B cell (primary cell): ENCODE measurements at regions of chr1 and their contacts with region 1.

Region 1: GRCh38 chr1:235866913-235867845 is 473 bp upstream of the LYST start:
- DNase-seq: peak; percentile 98
- ATAC-seq: peak; percentile 74
- H3K4me3 ChIP-seq: peak overlapping the region; percentile 62 to 97 (median 93)
- H3K4me3 Mint-ChIP-seq: peak overlapping the region; percentile 91
- H3K27ac ChIP-seq: peak overlapping the region; percentile 94 to 99
- H3K27ac Mint-ChIP-seq: peak overlapping the region; percentile 94
- H3K4me1 ChIP-seq: peaks cover 38 to 42% of the 10 kb centered on the region in 2 donors
- H3K4me1 Mint-ChIP-seq: peaks cover 50% of the 10 kb centered on the region
- H3K27me3 ChIP-seq: no peaks in the 10 kb centered on the region
- H3K27me3 Mint-ChIP-seq: no peaks in the 10 kb centered on the region
- CTCF ChIP-seq: no peak

Region 2: DNA sequence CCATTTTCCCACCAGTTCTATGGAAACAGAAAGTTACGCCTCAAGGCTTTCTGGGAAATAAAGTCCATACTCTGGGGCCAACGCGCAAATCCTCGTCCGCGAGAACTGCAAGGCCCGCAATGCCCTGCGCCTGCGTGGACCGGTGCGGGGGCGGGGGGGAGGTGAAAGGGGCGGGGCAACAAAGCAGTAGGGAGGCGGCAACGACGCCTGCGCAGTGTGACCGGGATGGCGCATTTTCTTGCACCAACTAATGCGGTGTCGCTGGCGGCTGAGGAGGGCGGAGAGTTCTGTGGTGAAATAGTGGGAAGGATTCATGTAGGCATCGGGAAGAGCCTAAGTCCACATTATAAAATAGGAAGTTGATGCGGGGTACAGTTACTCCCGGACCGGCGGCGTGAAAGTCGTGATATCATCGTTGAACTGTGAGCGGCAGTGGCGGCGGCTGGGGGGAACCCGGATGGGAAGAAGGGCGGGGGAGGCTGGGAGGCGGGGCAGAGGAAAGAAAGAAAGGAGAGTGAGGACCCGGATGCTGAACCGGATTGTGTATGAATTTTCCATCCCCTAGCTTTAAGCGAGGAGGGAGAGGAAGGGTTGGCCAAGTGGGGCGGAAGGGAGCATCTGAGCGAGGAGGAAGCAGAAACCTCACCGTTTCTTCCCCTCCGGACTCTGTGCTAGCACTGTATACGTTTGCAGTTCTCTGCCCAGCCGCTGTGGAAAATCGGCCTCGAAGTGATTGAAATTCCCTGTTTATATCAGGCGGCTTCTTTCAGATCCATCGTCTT is 538.6 kb before region 1 on chr1 and contains the start of gene GGPS1:
- CTCF ChIA-PET with region 1: no interaction called
- POLR2A ChIA-PET with region 1: no interaction called
- intact Hi-C with region 1: loop called (anchors 2 kb)
- DNase-seq: peak; percentile 98
- ATAC-seq: peak; percentile 75
- H3K4me3 ChIP-seq: peak within 1 kb of the TSS; percentile 89 to 99 (median 99)
- H3K4me3 Mint-ChIP-seq: no peak within 1 kb of the TSS
- H3K27ac ChIP-seq: peak within 1 kb of the TSS; percentile 89 to 98
- H3K27ac Mint-ChIP-seq: no peak within 1 kb of the TSS
- H3K4me1 ChIP-seq: peaks cover 33 to 58% of the 10 kb centered on the region in 2 donors
- H3K4me1 Mint-ChIP-seq: peaks cover 53% of the 10 kb centered on the region
- H3K27me3 ChIP-seq: no peaks in the 10 kb centered on the region
- H3K27me3 Mint-ChIP-seq: no peaks in the 10 kb centered on the region
- CTCF ChIP-seq: peak; percentile 36
- total RNA-seq, gene GGPS1: 43.6 and 46.8 TPM in 2 replicates

Region 3: DNA sequence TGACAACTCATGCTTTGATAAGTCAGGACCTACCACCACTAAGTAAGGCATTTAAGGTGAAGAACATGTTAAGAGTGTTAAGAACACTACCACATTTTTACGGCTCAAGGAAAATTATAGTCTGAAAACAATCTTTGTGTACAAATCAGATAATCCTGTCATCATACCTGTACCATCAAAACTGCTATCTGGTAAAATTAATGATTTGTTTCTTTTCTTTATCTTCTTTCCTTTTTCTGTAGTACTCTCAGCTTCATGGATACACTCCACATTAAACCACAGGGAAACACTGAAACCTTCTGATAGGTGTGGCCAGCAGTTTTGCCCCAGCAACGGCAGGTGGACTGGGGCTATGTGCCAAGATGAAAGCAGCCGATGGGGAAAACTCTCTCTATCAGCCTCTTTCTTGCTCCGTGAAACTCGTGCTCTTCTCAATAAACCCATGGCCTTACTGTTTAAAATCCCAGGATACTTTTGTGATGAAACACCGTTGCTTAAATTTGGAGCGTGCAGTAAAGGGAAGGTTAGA is 75.6 kb before region 1 on chr1:
- CTCF ChIA-PET with region 1: no interaction called
- POLR2A ChIA-PET with region 1: no interaction called
- intact Hi-C with region 1: no loop called
- DNase-seq: no peak
- ATAC-seq: no peak
- H3K4me3 ChIP-seq: no peak overlapping the region
- H3K4me3 Mint-ChIP-seq: no peak overlapping the region
- H3K27ac ChIP-seq: peak overlapping the region in 1 of 2 donors; percentile 16
- H3K27ac Mint-ChIP-seq: no peak overlapping the region
- H3K4me1 ChIP-seq: peaks cover 7 to 9% of the 10 kb centered on the region in 2 donors
- H3K4me1 Mint-ChIP-seq: peaks cover 13% of the 10 kb centered on the region
- H3K27me3 ChIP-seq: no peaks in the 10 kb centered on the region
- H3K27me3 Mint-ChIP-seq: no peaks in the 10 kb centered on the region
- CTCF ChIP-seq: no peak

Region 4: DNA sequence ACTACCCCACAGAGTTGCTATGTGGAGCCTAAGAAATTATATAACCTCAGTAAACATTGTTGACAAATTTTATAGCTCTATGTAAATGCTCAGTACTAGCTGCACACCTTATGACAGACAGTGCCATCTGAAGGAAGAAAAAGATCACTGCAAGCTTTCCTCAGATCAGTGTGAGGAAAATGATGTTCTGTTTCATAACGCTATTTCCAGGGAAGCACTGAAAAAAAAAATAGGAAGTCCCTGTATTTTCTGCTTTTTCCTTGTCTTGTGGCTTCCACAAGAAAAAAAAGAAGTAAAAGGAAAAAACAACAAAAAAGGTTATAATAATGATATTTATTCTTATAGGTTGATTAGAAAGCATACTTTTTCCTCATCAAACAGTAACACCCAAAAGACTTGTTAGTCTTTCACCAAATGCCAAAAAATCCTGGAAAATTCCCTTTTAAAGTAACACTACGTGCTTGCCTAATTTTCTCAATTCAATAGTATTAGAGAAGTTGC is 23.7 kb before region 1 on chr1:
- CTCF ChIA-PET with region 1: interaction called, 85 read pairs
- POLR2A ChIA-PET with region 1: interaction called, 6 read pairs
- intact Hi-C with region 1: loop called (anchors 2 kb)
- DNase-seq: peak; percentile 50
- ATAC-seq: peak; percentile 58
- H3K4me3 ChIP-seq: no peak overlapping the region
- H3K4me3 Mint-ChIP-seq: peak overlapping the region; percentile 42
- H3K27ac ChIP-seq: peak overlapping the region; percentile 71 to 84
- H3K27ac Mint-ChIP-seq: peak overlapping the region; percentile 73
- H3K4me1 ChIP-seq: peaks cover 65 to 67% of the 10 kb centered on the region in 2 donors
- H3K4me1 Mint-ChIP-seq: peaks cover 90% of the 10 kb centered on the region
- H3K27me3 ChIP-seq: no peaks in the 10 kb centered on the region
- H3K27me3 Mint-ChIP-seq: no peaks in the 10 kb centered on the region
- CTCF ChIP-seq: peak; percentile 74

Region 5: GRCh38 chr1:235946571-235946981 is 79.4 kb after region 1 on chr1:
- CTCF ChIA-PET with region 1: interaction called, 35 read pairs
- POLR2A ChIA-PET with region 1: interaction called, 4 read pairs
- intact Hi-C with region 1: loop called (anchors 1 kb)
- DNase-seq: no peak
- ATAC-seq: peak; percentile 61
- H3K4me3 ChIP-seq: peak overlapping the region in 1 of 5 experiments; percentile 34
- H3K4me3 Mint-ChIP-seq: peak overlapping the region; percentile 64
- H3K27ac ChIP-seq: peak overlapping the region; percentile 9 to 68
- H3K27ac Mint-ChIP-seq: peak overlapping the region; percentile 79
- H3K4me1 ChIP-seq: peaks cover 78 to 88% of the 10 kb centered on the region in 2 donors
- H3K4me1 Mint-ChIP-seq: peaks cover 81% of the 10 kb centered on the region
- H3K27me3 ChIP-seq: no peaks in the 10 kb centered on the region
- H3K27me3 Mint-ChIP-seq: no peaks in the 10 kb centered on the region
- CTCF ChIP-seq: no peak

Region 6: GRCh38 chr1:236156512-236157208 is 289.5 kb after region 1 on chr1:
- CTCF ChIA-PET with region 1: no interaction called
- POLR2A ChIA-PET with region 1: no interaction called
- intact Hi-C with region 1: loop called (anchors 5 kb)
- DNase-seq: peak; percentile 84
- ATAC-seq: peak; percentile 89
- H3K4me3 ChIP-seq: no peak overlapping the region
- H3K4me3 Mint-ChIP-seq: peak overlapping the region; percentile 73
- H3K27ac ChIP-seq: no peak overlapping the region
- H3K27ac Mint-ChIP-seq: peak overlapping the region; percentile 84
- H3K4me1 ChIP-seq: peaks cover 31 to 48% of the 10 kb centered on the region in 2 donors
- H3K4me1 Mint-ChIP-seq: peaks cover 59% of the 10 kb centered on the region
- H3K27me3 ChIP-seq: peaks cover 0 to 36% (median 16%) of the 10 kb centered on the region in 4 experiments
- H3K27me3 Mint-ChIP-seq: peaks cover 29% of the 10 kb centered on the region
- CTCF ChIP-seq: no peak

Region 7: GRCh38 chr1:236795035-236795756 is 928.0 kb after region 1 on chr1 and contains the start of gene MTR:
- CTCF ChIA-PET with region 1: no interaction called
- POLR2A ChIA-PET with region 1: no interaction called
- intact Hi-C with region 1: loop called (anchors 5 kb)
- DNase-seq: peak; percentile 96
- ATAC-seq: peak; percentile 95
- H3K4me3 ChIP-seq: peak within 1 kb of the TSS; percentile 82 to 96 (median 93)
- H3K4me3 Mint-ChIP-seq: peak within 1 kb of the TSS; percentile 88
- H3K27ac ChIP-seq: peak within 1 kb of the TSS; percentile 88 to 95
- H3K27ac Mint-ChIP-seq: peak within 1 kb of the TSS; percentile 88
- H3K4me1 ChIP-seq: peaks cover 14% of the 10 kb centered on the region in 2 donors
- H3K4me1 Mint-ChIP-seq: peaks cover 35% of the 10 kb centered on the region
- H3K27me3 ChIP-seq: no peaks in the 10 kb centered on the region
- H3K27me3 Mint-ChIP-seq: peaks cover 21% of the 10 kb centered on the region
- CTCF ChIP-seq: no peak
- total RNA-seq, gene MTR: 49.1 and 50.4 TPM in 2 replicates